IMR-90 (cell line): ENCODE measurements at regions of chr18 and their contacts with region 1.

Region 1: DNA sequence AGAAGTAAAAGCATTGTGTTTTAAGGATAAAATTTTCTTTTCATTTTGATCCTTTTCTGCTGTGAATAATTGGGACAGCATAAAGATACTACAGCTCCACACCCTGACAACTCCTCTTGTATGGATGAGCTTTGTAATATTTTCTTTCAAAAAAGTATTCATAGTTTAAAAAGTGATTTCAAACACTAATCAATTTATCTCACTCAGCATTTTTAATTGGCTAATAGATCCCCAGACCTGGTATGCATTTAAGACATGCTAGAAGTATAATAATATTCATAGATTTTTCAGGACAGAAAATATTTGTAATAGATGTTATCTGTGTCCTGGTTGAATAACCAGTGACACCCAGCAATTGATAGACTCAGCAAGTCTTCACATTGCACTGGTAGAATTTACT is 510.7 kb downstream of the RIT2 start:
- DNase-seq: no peak
- ATAC-seq: no peak
- H3K4me3 ChIP-seq: no peak overlapping the region
- H3K27ac ChIP-seq: no peak overlapping the region
- H3K4me1 ChIP-seq: no peaks in the 10 kb centered on the region
- H3K27me3 ChIP-seq: no peaks in the 10 kb centered on the region
- CTCF ChIP-seq: no peak
- POLR2A ChIP-seq: no peak
- RAD21 ChIP-seq: no peak

Region 2: GRCh38 chr18:42619626-42620170 is 14.9 kb after region 1 on chr18:
- CTCF ChIA-PET with region 1: no interaction called
- POLR2A ChIA-PET with region 1: no interaction called
- dilution Hi-C with region 1: no loop called
- in situ Hi-C with region 1: no loop called
- intact Hi-C with region 1: loop called (anchors 1 kb)
- DNase-seq: no peak
- ATAC-seq: no peak
- H3K4me3 ChIP-seq: no peak overlapping the region
- H3K27ac ChIP-seq: no peak overlapping the region
- H3K4me1 ChIP-seq: no peaks in the 10 kb centered on the region
- H3K27me3 ChIP-seq: no peaks in the 10 kb centered on the region
- CTCF ChIP-seq: no peak
- POLR2A ChIP-seq: no peak
- RAD21 ChIP-seq: no peak